Heart left ventricle (tissue), 16 donors: ENCODE measurements at regions of chr12 and their contacts with region 1.

Region 1: DNA sequence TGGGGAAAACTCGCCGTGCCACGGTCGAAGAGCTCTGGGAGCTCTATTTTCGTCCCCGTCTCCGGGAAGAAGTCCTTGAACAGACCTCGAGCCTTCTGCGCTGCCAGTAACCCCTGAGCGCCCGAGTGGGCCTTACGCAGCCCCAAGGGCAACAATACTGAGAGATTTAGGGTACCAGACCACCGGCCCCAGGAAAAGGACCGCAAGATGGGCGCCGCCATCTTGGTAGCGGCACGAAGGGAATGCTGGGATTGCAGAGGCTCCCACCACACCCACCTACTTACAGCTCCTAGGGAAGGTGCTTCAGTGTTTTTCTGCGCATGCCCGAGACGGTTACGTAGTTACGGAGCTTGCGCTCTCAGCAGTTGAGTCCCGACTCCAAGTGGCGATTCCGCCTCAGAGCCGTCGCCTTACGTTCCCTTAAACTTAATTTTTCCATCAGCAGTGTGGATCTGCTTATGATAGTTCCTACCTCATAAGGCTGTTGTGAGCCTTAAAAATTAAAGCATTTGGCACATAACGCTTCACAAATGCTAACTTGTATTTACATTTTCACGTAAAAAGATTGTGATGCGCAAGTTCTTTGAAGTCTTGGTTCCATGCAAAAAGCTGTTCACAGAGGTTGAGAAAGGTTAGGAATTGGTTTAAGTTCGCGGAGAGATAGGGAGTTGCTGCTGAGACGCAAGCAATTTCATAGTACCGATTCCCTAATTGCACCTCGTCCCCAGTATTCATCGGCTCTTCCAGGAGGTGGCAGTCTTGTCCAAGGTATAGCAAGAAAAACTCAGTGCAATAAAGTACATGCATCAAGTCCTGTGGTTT is at the start of gene YARS2:
- DNase-seq: peak; percentile 93 to 97 (median 96)
- ATAC-seq: peak; percentile 98 to 99 (median 99)
- H3K4me3 ChIP-seq: peak within 1 kb of the TSS; percentile 71 to 98 (median 84)
- H3K27ac ChIP-seq: peak within 1 kb of the TSS; percentile 61 to 95 (median 89)
- H3K4me1 ChIP-seq: peaks cover 5 to 28% (median 16%) of the 10 kb centered on the region in 12 donors
- H3K27me3 ChIP-seq: no peaks in the 10 kb centered on the region
- CTCF ChIP-seq: peak; percentile 61 to 88 (median 84)
- POLR2A ChIP-seq: peak in 1 of 2 donors; percentile 47
- total RNA-seq, gene YARS2: 7.7 to 19.4 (median 14.2) TPM

Region 2: GRCh38 chr12:32811686-32812392 is 56.0 kb after region 1 on chr12:
- intact Hi-C with region 1: no loop called
- DNase-seq: no peak
- ATAC-seq: peak in 2 of 4 donors; percentile 50 to 60
- H3K4me3 ChIP-seq: no peak overlapping the region
- H3K27ac ChIP-seq: peak overlapping the region in 7 of 12 donors; percentile 24 to 69 (median 36)
- H3K4me1 ChIP-seq: peaks cover 0 to 43% (median 7%) of the 10 kb centered on the region in 12 donors
- H3K27me3 ChIP-seq: no peaks in the 10 kb centered on the region
- CTCF ChIP-seq: no peak
- POLR2A ChIP-seq: no peak

Region 3: DNA sequence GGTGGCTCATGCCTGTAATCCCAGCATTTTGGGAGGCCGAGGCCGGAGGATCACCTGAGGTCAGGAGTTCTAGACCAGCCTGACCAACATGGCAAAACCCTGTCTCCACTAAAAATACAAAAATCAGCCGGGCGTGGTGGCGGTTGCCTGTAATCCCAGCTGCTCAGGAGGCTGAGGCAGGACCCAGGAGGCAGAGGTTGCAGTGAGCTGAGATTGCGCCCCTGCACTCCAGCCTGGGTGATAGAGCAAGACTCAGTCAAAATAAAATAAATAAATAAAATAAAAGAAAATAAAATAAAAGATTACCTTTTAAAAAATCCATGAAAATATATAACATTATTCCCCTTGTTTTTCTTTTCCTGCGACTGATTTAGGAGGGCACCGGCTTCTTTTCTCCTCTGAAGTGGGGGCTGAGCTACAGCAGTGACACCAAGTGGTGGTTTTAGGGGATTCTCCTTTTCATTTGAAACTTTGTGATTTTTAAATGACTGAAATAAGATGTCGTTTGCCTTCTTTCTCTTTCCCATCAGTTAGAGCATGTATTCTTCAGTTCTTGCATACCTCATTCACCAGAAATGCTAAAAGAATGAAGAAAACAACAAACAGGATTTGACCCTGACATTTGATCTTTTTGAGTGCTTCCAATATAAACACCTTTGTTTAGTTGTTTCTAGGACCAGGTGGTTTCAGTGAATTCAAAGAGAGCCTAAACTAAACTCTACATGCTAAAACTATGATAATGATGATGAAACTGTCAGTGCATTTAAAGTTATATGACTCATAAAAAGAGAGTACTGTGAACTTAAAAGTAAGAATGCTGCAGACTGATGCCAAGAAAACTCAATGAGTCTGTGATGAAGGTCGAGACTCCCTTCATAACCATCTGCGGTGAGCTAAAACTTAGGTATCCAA is 163.3 kb after region 1 on chr12:
- intact Hi-C with region 1: loop called (anchors 1 to 5 kb)
- DNase-seq: no peak
- ATAC-seq: peak in 3 of 4 donors; percentile 50 to 73 (median 71)
- H3K4me3 ChIP-seq: no peak overlapping the region
- H3K27ac ChIP-seq: no peak overlapping the region
- H3K4me1 ChIP-seq: no peaks in the 10 kb centered on the region
- H3K27me3 ChIP-seq: no peaks in the 10 kb centered on the region
- CTCF ChIP-seq: peak in 11 of 12 donors; percentile 34 to 65 (median 51)
- POLR2A ChIP-seq: no peak

Region 4: DNA sequence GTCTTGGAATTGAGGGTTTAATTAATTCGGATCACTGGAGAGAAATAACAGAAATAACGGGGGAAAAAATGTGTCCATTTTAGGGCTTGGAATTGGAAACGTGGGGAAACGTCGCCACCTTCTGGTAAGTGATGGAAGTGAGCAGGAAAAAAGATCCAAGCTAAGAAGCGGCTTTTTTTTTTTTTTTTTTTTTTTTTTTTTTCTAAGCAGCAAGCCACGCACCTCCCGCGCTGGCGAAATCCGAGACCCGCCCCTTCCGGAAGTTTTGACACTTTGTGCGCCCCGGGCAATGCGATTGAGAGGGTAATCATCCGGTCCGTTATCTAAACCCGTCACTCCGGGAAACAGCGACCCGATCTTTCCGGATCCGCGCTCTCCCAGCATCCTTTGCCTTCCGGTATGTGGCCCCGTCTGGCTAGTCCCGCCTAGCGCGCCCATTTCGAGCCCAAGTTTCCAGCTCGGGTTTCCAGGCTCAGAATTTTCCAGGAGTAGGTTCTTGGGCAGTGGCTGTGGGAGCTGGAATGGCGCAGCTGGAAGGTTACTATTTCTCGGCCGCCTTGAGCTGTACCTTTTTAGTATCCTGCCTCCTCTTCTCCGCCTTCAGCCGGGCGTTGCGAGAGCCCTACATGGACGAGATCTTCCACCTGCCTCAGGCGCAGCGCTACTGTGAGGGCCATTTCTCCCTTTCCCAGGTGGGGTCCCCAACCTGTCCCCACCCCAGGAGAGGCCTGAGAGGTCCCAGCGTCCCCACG is 1266.4 kb after region 1 on chr12 and contains the start of gene ALG10:
- intact Hi-C with region 1: loop called (anchors 1 to 5 kb)
- DNase-seq: peak; percentile 97 to 98 (median 97)
- ATAC-seq: peak; percentile 99 to 100 (median 100)
- H3K4me3 ChIP-seq: peak within 1 kb of the TSS; percentile 30 to 85 (median 70)
- H3K27ac ChIP-seq: peak within 1 kb of the TSS in 11 of 12 donors; percentile 66 to 89 (median 84)
- H3K4me1 ChIP-seq: peaks cover 0 to 18% (median 10%) of the 10 kb centered on the region in 12 donors
- H3K27me3 ChIP-seq: no peaks in the 10 kb centered on the region
- CTCF ChIP-seq: peak; percentile 68 to 81 (median 75)
- POLR2A ChIP-seq: peak in 1 of 2 donors; percentile 24
- total RNA-seq, gene ALG10: 2.1 to 5.5 (median 3.6) TPM